Aorta (tissue), 5 donors: ENCODE measurements at regions of chr17 and their contacts with region 1.

Region 1: GRCh38 chr17:4709794-4710692 is at the start of gene ARRB2:
- DNase-seq: peak; percentile 99
- ATAC-seq: peak; percentile 98
- H3K4me3 ChIP-seq: peak within 1 kb of the TSS; percentile 60
- H3K27ac ChIP-seq: peak within 1 kb of the TSS in 1 of 2 donors; percentile 46
- H3K4me1 ChIP-seq: no peaks in the 10 kb centered on the region
- H3K27me3 ChIP-seq: no peaks in the 10 kb centered on the region
- total RNA-seq, gene ARRB2: 71.8 to 119 TPM

Region 2: DNA sequence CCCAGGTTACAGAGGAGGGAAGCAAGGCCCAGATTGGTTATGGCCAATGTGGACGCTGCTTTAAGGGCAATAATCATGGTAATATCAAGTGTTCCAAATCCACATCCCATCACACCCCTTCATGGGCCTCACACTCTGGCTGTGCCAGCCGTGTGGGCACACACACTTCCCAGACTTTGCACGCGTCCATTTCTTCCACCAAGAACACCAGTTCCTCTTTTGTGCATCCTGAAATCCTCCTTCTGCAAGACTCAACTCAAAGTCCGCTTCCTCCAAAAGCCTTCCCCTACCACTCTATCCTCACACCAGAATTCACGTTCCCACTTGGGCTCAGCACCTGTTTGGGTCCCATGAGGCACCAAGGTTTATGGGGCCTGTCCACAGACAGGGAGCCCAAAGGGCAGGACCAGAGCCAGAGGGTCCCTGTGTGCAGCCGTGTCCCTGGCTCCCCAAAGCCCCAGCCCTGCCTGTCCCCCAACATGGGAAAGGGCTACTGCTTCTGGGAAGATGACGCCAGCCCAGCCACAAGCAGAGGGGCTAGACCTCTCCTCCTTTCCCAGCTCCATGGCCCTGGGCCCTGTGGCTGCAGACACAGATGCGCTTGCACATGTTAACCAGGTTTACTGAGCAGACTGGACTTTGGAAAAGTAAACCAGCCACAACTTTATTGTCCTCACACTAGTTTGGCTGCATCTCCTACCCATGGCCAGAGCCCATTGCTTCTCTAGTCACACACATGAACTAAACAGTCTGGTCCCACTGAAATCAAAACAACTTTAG is 256.0 kb before region 1 on chr17:
- intact Hi-C with region 1: no loop called
- DNase-seq: no peak
- ATAC-seq: no peak
- H3K4me3 ChIP-seq: no peak overlapping the region
- H3K27ac ChIP-seq: no peak overlapping the region
- H3K4me1 ChIP-seq: no peaks in the 10 kb centered on the region
- H3K27me3 ChIP-seq: no peaks in the 10 kb centered on the region

Region 3: DNA sequence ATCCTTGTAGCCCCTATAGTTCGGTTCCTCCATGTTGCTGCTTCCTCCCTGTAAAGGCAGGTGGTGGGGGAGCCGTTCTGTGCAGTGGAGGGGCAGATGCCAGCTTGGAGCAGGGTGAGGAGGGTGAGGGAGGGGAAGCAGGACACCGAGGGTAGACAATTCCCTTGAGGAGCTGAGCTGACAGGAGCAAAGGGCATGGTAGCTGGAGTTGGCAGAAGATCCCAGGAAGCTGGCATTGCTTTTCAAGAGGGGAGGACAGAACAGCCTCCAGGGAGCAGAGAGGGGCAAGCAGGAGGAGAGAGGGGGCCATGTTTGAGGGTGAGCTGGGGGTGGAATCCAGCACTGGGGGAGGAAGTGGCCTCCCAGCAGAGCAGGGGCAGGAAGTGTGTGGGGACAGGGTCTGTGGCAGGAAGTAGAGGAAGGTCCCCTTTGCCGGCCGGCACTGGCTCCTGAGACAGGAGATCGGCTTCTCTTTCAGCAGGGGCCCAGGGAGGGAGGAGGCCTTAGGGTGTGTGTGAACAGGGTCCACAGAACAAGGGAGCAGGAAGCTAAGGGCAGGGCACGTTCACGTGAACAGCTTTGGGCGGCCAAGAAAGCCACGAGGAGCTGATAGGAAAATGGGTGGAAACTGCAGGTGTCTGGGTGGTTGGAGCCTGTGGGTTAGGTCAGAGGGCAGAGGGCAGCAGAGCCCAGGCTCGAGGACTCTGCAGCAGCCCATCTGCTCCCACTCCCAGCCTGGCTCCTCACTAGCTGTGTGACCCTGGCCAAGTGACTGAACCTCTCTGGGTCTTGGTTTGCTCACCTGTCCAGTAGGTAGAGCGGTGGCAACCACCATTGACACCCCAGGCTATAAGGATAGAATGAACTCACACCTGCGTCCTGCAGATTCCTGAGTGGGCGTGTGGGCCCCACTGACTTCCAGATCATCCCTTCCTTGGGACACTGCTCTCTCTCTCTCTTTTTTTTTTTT is 228.8 kb before region 1 on chr17:
- intact Hi-C with region 1: no loop called
- DNase-seq: no peak
- ATAC-seq: no peak
- H3K4me3 ChIP-seq: no peak overlapping the region
- H3K27ac ChIP-seq: no peak overlapping the region
- H3K4me1 ChIP-seq: no peaks in the 10 kb centered on the region
- H3K27me3 ChIP-seq: no peaks in the 10 kb centered on the region

Region 4: DNA sequence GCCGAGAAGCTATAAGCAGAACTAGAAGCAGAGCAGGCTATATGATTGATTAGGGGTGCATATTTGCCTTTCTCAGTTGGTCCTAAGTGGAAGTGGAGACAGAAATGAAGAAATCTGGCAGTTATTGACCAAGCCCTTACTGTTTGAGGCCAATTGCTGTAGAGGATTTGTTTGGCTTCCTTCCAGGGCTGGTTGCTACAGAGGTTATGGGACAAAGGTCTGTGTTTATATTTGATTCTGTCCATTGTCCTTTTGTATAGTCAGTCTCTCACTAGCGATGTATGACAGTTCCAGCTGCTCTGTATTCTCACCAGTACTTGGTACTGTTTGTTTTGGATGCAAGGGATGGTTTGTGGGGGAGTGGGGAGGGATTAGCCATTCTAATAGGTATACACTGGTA is 61.3 kb before region 1 on chr17:
- intact Hi-C with region 1: no loop called
- DNase-seq: no peak
- ATAC-seq: no peak
- H3K4me3 ChIP-seq: no peak overlapping the region
- H3K27ac ChIP-seq: no peak overlapping the region
- H3K4me1 ChIP-seq: no peaks in the 10 kb centered on the region
- H3K27me3 ChIP-seq: no peaks in the 10 kb centered on the region

Region 5: GRCh38 chr17:4665027-4665426 is 45.0 kb before region 1 on chr17:
- intact Hi-C with region 1: no loop called
- DNase-seq: no peak
- ATAC-seq: no peak
- H3K4me3 ChIP-seq: no peak overlapping the region
- H3K27ac ChIP-seq: no peak overlapping the region
- H3K4me1 ChIP-seq: no peaks in the 10 kb centered on the region
- H3K27me3 ChIP-seq: no peaks in the 10 kb centered on the region

Region 6: DNA sequence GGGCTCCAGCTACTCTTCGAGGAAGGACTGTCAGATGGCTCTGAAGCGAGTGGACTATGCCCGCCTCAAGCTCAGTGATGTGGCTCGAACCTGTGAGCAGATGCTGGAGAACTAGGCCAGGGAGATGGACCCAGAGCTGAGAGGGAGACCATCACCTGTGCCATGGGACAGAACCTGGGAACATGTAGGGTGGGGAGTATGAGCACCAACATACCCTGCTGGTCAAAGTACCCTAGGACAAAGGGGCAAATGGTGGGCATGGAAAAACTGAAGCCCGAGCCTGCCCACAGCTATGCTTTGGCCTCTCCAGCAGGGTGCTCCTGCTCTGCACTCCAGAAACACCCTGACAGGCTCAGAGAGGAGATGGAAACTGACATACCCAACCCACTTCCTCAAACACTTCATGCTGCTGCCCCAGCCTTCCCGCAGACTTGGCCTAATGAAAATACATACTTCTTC is 23.1 kb after region 1 on chr17:
- intact Hi-C with region 1: loop called in 1 of 2 experiments (anchors 2 kb)
- DNase-seq: peak in 1 of 2 donors; percentile 76
- ATAC-seq: no peak
- H3K4me3 ChIP-seq: no peak overlapping the region
- H3K27ac ChIP-seq: no peak overlapping the region
- H3K4me1 ChIP-seq: no peaks in the 10 kb centered on the region
- H3K27me3 ChIP-seq: no peaks in the 10 kb centered on the region

Region 7: GRCh38 chr17:4796553-4796921 is 86.5 kb after region 1 on chr17:
- intact Hi-C with region 1: loop called in 1 of 2 experiments (anchors 5 kb)
- DNase-seq: no peak
- ATAC-seq: no peak
- H3K4me3 ChIP-seq: peak overlapping the region; percentile 74 to 94
- H3K27ac ChIP-seq: peak overlapping the region in 1 of 2 donors; percentile 82
- H3K4me1 ChIP-seq: no peaks in the 10 kb centered on the region
- H3K27me3 ChIP-seq: no peaks in the 10 kb centered on the region

Region 8: GRCh38 chr17:4891411-4892342 is 181.6 kb after region 1 on chr17:
- intact Hi-C with region 1: loop called in 1 of 2 experiments (anchors 5 kb)
- DNase-seq: no peak
- ATAC-seq: no peak
- H3K4me3 ChIP-seq: no peak overlapping the region
- H3K27ac ChIP-seq: no peak overlapping the region
- H3K4me1 ChIP-seq: no peaks in the 10 kb centered on the region
- H3K27me3 ChIP-seq: no peaks in the 10 kb centered on the region

Region 9: DNA sequence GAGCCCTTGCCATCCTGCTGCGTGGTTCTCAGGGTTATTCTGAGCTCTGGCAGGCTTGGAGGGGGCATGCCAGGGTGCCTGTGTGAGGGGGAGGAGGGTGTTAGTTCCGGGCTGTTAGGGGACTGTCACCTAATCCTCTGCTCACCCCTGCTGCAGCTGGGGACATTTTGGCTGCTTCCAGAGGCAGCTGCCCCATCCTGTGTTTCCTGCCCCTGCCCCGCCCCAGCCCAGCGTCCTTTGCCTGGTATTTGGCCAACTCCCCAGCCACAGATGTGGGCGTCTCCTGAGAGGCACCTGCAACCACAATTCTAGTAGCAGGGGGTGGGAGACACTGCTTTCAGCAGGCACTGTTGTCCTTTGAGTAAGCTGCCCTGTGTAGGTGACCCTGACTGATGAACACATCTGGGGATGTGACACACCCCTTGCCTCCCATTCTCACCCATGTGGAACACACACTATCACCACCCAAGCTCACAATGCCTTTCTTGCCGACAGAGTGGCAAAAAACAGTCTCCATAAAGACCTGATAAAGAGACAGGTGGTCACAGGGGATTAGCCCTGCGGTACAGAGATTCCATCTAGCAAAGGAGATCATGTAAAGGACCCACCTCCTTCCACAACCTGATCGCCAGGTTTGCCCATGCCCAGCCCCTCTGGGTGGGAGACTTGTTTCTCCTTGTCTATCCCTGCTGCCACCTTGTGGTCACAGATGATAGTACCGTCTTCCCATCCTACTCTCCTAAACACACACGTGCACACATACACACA is 193.2 kb after region 1 on chr17 and contains the start of gene CHRNE:
- intact Hi-C with region 1: loop called in 1 of 2 experiments (anchors 5 kb)
- DNase-seq: peak in 1 of 2 donors; percentile 77
- ATAC-seq: no peak
- H3K4me3 ChIP-seq: no peak within 1 kb of the TSS
- H3K27ac ChIP-seq: no peak within 1 kb of the TSS
- H3K4me1 ChIP-seq: no peaks in the 10 kb centered on the region
- H3K27me3 ChIP-seq: no peaks in the 10 kb centered on the region
- total RNA-seq, gene CHRNE: 0.84 to 1.6 TPM